ENCODE measurements at regions of chr7 and their contacts with region 1.

Region 1: DNA sequence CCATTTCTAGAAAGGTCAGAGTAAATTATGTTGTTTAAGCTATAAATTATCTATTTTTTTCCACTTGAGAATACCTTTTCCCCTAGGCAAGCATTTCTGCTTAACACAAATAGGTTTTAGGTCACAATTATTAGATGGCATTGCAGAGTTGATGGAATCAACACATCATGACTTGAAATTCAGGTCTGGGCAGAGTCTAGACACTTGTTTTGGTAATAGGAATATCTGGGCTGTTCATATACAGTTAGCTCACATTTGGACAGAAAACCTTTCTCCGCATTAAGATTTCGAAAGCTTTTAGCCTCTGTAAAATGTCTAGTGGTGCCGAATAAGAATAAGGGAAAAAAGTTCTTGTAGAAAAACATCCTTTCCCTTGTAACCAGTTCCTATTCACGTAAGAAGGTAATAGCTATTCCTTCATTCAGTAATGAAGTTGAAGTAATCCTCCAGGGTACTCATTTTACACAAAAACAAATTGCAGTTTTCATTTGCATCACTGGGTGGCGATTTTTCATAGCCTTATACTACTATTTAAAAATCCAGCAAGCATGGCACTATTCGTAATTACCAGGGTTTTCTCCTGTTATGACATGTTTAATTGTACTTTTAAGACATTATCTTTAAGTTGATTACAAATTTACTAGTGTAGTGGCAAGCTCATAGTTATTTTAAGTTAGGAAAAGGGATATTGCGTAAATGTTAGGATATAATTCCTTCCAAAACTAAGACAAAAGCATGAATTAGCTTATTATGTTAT is 37.0 kb downstream of the RPA3 start:
- DNase-seq: peak in 23 of 35 experiments; percentile 5 to 77 (median 37)
- ATAC-seq: peak; percentile 58 to 87 (median 78)
- H3K4me3 ChIP-seq: no peak overlapping the region
- H3K4me3 Mint-ChIP-seq: no peak overlapping the region
- H3K27ac ChIP-seq: peak overlapping the region; percentile 54
- H3K27ac Mint-ChIP-seq: peak overlapping the region; percentile 72 to 85
- H3K4me1 ChIP-seq: peaks cover 0 to 3% of the 10 kb centered on the region in 2 experiments
- H3K4me1 Mint-ChIP-seq: peaks cover 35 to 44% (median 39%) of the 10 kb centered on the region in 3 donors
- H3K27me3 ChIP-seq: no peaks in the 10 kb centered on the region
- H3K27me3 Mint-ChIP-seq: no peaks in the 10 kb centered on the region

Region 2: GRCh38 chr7:7399707-7400106 is 281.6 kb before region 1 on chr7:
- CTCF ChIA-PET with region 1: no interaction called
- POLR2A ChIA-PET with region 1: no interaction called
- DNase-seq: no peak
- ATAC-seq: no peak
- H3K4me3 ChIP-seq: no peak overlapping the region
- H3K4me3 Mint-ChIP-seq: no peak overlapping the region
- H3K27ac ChIP-seq: no peak overlapping the region
- H3K27ac Mint-ChIP-seq: no peak overlapping the region
- H3K4me1 ChIP-seq: no peaks in the 10 kb centered on the region
- H3K4me1 Mint-ChIP-seq: no peaks in the 10 kb centered on the region
- H3K27me3 ChIP-seq: no peaks in the 10 kb centered on the region
- H3K27me3 Mint-ChIP-seq: peaks cover 0 to 3% of the 10 kb centered on the region in 2 donors

Region 3: GRCh38 chr7:7640221-7641128 is 40.9 kb before region 1 on chr7 and contains the start of gene UMAD1:
- CTCF ChIA-PET with region 1: interaction called, 5 to 25 read pairs
- POLR2A ChIA-PET with region 1: interaction called, 5 to 20 read pairs
- DNase-seq: peak; percentile 94 to 100 (median 99)
- ATAC-seq: peak; percentile 93 to 96 (median 96)
- H3K4me3 ChIP-seq: peak within 1 kb of the TSS; percentile 72 to 99
- H3K4me3 Mint-ChIP-seq: peak within 1 kb of the TSS; percentile 97 to 98 (median 97)
- H3K27ac ChIP-seq: peak within 1 kb of the TSS; percentile 95
- H3K27ac Mint-ChIP-seq: peak within 1 kb of the TSS; percentile 91 to 98
- H3K4me1 ChIP-seq: peaks cover 14 to 15% of the 10 kb centered on the region in 2 experiments
- H3K4me1 Mint-ChIP-seq: peaks cover 52 to 58% (median 53%) of the 10 kb centered on the region in 3 donors
- H3K27me3 ChIP-seq: no peaks in the 10 kb centered on the region
- H3K27me3 Mint-ChIP-seq: no peaks in the 10 kb centered on the region
- total RNA-seq, gene UMAD1: 13.8 to 19.8 (median 16.6) TPM

Region 4: DNA sequence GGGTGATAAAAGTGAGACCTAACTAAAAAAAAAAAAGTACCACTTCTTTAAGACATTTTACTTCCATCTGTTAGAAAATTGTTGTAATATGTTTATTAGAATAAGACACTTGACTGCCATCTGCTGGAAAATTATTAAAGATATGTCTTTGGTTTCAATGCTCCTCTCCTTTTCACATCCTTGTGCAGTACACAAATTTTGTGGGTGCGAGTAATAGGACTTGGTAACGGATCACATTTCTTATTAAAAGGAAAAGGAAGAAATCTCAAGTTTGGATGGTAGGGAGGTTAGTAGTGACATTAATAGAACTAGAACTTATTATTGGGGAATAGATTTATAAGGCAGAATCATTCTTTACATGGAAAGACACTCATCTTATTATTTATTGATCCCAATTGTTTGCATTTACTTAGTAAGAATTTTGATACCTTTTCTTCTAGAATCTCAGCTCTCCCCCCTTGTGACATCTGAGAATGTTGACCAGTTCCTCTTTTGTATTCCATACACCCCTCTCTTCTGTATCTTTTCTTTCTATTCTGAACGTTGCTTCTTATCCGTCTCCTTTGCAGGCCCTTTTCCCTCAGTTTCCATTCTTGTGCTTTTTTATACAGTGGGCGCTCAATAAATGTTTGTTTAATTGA is 80.1 kb after region 1 on chr7:
- CTCF ChIA-PET with region 1: interaction called, 13 to 34 read pairs
- POLR2A ChIA-PET with region 1: no interaction called
- DNase-seq: peak in 2 of 35 experiments; percentile 11 to 64
- ATAC-seq: peak in 1 of 4 experiments; percentile 34
- H3K4me3 ChIP-seq: peak overlapping the region; percentile 37 to 40
- H3K4me3 Mint-ChIP-seq: peak overlapping the region; percentile 81 to 91 (median 84)
- H3K27ac ChIP-seq: peak overlapping the region; percentile 71
- H3K27ac Mint-ChIP-seq: peak overlapping the region; percentile 97
- H3K4me1 ChIP-seq: peaks cover 7 to 22% of the 10 kb centered on the region in 2 experiments
- H3K4me1 Mint-ChIP-seq: peaks cover 41 to 42% (median 42%) of the 10 kb centered on the region in 3 donors
- H3K27me3 ChIP-seq: no peaks in the 10 kb centered on the region
- H3K27me3 Mint-ChIP-seq: no peaks in the 10 kb centered on the region

Region 5: DNA sequence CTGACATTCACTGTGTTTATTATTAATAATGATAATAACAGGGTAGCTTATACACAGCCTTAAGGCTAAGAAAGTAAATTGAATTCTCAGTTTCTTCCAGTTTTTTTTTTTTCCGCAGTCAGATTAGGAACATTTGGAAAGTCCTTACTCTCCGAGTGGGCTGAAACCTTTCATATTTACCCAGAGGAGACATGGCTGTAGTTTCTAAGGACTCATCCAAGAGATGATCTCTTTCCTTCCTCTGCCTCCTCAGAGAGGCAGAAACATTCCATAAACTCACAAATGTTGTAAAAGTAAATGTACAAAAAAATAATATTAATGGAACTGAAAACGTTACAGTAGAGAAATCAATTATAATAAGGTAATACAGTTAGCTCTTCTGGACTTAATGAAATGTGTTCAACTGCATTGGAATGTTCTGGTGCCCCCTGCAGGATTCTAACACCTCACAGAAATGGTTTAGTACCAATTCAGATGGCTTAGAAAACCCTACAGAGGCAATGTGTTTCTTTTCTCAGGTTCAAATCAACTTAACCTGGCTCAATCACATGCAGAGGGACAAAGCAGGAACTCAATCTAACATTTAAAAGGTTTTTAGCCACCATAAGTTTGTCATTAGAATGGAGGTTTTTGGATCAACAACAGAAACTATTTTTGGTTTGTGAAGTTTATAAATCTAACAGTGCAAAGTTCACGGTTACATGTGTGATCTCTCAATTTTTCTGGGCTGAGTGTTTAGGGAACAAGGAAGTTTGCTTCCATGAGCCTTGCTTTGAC is 508.9 kb after region 1 on chr7:
- CTCF ChIA-PET with region 1: interaction called, 18 to 81 read pairs
- POLR2A ChIA-PET with region 1: no interaction called
- DNase-seq: peak; percentile 5 to 85 (median 63)
- ATAC-seq: peak; percentile 60 to 80 (median 76)
- H3K4me3 ChIP-seq: no peak overlapping the region
- H3K4me3 Mint-ChIP-seq: no peak overlapping the region
- H3K27ac ChIP-seq: no peak overlapping the region
- H3K27ac Mint-ChIP-seq: peak overlapping the region in 1 of 2 donors; percentile 34
- H3K4me1 ChIP-seq: peaks cover 2 to 4% of the 10 kb centered on the region in 2 experiments
- H3K4me1 Mint-ChIP-seq: peaks cover 15 to 23% (median 20%) of the 10 kb centered on the region in 3 donors
- H3K27me3 ChIP-seq: no peaks in the 10 kb centered on the region
- H3K27me3 Mint-ChIP-seq: no peaks in the 10 kb centered on the region

Region 6: GRCh38 chr7:8295638-8296361 is 614.4 kb after region 1 on chr7:
- CTCF ChIA-PET with region 1: interaction called in 1 of 2 experiments, 14 read pairs
- POLR2A ChIA-PET with region 1: no interaction called
- DNase-seq: peak in 20 of 35 experiments; percentile 1 to 81 (median 10)
- ATAC-seq: peak; percentile 65 to 78 (median 71)
- H3K4me3 ChIP-seq: no peak overlapping the region
- H3K4me3 Mint-ChIP-seq: no peak overlapping the region
- H3K27ac ChIP-seq: no peak overlapping the region
- H3K27ac Mint-ChIP-seq: no peak overlapping the region
- H3K4me1 ChIP-seq: no peaks in the 10 kb centered on the region
- H3K4me1 Mint-ChIP-seq: peaks cover 0 to 3% (median 3%) of the 10 kb centered on the region in 3 donors
- H3K27me3 ChIP-seq: peaks cover 0 to 3% of the 10 kb centered on the region in 2 experiments
- H3K27me3 Mint-ChIP-seq: peaks cover 16 to 20% of the 10 kb centered on the region in 2 donors